ENCODE measurements at regions of chr20 and their contacts with region 1.

Region 1: DNA sequence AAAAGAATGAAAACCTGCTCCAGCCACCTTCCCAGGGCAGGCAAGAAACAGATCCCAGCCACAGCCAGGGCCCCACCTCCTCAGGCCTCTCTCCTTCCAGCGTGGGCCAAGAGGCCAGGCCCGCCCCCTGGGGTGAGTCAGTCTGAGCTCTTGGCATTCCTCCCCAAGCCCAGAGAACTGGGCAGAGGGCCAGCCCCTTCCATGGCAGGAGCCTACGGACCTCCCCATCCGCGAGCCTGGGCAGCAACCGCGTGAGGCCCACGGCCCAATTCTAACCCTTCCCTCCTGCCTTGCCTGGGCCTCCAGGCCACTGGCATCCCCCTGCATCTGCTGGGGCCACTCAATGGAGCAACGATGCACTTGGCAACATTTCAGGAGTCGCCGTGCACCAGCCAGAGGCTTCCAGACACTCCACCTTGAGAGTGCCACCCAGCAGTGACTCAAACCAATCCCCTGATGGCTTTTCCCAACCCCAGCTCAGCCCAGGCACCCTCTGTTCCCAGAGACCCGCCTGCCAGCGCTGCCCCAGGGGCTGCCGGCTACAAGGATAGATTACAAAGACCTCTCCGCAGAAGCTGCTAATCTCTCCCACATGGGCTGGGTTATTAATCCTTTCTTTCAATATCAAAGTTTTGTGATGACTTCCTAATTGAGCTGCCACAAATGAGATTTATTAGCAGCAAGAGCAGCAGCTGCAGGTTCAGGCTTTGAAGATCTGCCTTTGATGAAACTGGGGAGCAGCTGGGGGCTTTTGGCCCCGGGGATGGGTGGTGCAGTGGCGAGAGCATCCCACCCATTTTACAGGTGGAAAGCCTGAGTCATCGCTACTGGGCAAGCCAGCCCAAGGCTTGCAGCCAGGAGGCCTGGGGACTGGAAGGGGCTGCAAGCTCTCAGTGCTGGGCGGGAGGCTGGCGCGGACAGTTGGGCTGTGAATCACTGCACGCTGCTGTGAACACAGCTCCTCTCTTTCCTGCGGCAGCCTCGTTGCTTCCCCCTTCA is 85.7 kb downstream of the NFATC2 start:
- DNase-seq: peak; percentile 96
- H3K4me3 ChIP-seq: peak overlapping the region; percentile 21 to 43 (median 30)
- H3K27ac ChIP-seq: peak overlapping the region; percentile 58
- H3K4me1 ChIP-seq: peaks cover 20% of the 10 kb centered on the region
- H3K27me3 ChIP-seq: no peaks in the 10 kb centered on the region
- CTCF ChIP-seq: no peak

Region 2: GRCh38 chr20:51375561-51375960 is 81.2 kb before region 1 on chr20:
- CTCF ChIA-PET with region 1: no interaction called
- dilution Hi-C with region 1: no loop called
- in situ Hi-C with region 1: no loop called
- intact Hi-C with region 1: no loop called
- DNase-seq: no peak
- H3K4me3 ChIP-seq: no peak overlapping the region
- H3K27ac ChIP-seq: no peak overlapping the region
- H3K4me1 ChIP-seq: no peaks in the 10 kb centered on the region
- H3K27me3 ChIP-seq: no peaks in the 10 kb centered on the region
- CTCF ChIP-seq: no peak

Region 3: GRCh38 chr20:51385646-51386530 is 70.9 kb before region 1 on chr20:
- CTCF ChIA-PET with region 1: no interaction called
- dilution Hi-C with region 1: no loop called
- in situ Hi-C with region 1: no loop called
- intact Hi-C with region 1: loop called (anchors 5 kb)
- DNase-seq: peak; percentile 16
- H3K4me3 ChIP-seq: no peak overlapping the region
- H3K27ac ChIP-seq: no peak overlapping the region
- H3K4me1 ChIP-seq: no peaks in the 10 kb centered on the region
- H3K27me3 ChIP-seq: no peaks in the 10 kb centered on the region
- CTCF ChIP-seq: peak; percentile 41 to 79

Region 4: DNA sequence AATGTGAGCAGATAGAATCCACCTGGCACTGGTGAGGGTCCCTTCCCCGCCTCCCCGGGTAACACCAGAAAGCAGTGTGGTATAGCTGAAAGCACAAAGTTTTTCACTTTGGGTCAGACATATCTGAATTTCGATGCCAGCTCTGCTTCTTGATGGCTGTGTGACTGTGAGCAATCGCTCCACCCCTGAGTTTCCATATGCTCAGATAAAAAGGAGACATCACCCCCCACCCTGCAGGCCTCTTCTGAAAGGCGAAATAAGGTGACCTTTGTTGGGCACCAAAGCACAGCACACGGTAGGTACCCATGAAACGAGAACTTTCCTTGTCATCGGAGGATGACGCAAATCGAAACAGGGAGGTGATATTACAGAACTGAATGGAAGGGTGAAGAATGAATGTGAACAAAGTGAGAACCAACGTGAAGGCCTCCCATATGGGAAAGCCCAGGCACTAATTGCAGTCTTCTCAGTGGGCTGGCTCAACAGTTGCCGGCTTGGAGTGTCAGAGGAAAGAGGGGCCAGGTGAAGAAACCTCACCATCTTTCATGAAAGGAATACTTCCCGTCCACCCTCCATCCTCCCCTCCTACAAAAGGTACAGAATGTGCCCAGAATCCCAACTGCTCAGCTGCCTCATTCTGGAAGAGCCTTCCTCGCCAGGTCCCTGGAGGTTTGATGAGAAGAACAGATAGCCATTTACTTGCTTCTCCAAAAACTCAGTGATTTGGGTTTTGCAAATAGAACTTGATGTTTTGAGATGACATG is 23.9 kb after region 1 on chr20:
- CTCF ChIA-PET with region 1: no interaction called
- dilution Hi-C with region 1: no loop called
- in situ Hi-C with region 1: no loop called
- intact Hi-C with region 1: loop called (anchors 1 kb)
- DNase-seq: no peak
- H3K4me3 ChIP-seq: no peak overlapping the region
- H3K27ac ChIP-seq: no peak overlapping the region
- H3K4me1 ChIP-seq: peaks cover 5% of the 10 kb centered on the region
- H3K27me3 ChIP-seq: no peaks in the 10 kb centered on the region
- CTCF ChIP-seq: no peak

Region 5: DNA sequence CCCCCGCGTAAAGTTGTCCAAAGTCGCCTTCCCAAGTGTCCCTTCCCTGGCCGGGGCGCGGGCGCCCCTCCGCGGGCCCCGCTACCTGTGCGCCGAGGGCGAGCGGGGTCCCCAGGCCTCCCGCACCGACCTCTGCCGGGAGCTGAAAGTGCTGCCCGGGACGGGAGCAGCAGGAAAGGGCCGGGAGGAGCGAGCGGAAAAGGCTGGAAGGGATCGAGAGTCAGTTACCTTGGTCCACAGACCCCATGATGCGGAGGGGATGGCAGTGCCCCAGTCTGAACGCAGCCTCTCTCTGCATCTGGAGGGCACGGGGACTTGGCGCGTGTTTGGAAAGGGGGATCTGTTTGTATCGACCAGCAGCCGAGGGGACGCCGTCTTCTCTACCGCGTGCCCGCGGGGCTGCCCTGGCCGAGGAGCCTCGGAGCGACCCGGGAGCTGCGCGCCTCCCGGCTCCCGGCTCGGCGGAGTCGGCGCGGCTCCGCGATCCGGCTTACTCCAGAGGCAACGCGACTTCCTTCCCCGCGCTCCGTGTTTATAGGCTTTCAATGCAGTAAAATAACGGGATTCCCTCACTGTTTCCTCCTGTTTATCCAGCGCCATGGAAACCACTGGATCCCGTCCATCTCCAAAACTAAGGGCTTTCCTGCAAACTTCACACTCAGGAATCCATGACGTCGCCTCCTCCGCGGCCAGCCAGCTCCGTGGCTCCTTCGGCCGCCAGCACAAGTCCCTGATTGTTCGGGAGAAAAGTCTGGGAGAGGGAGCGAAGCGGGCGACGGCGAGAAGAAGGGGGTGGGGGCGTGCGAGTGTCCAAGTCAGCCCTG is 105.7 kb after region 1 on chr20:
- CTCF ChIA-PET with region 1: no interaction called
- dilution Hi-C with region 1: no loop called
- in situ Hi-C with region 1: no loop called
- intact Hi-C with region 1: loop called (anchors 5 kb)
- DNase-seq: peak; percentile 75
- H3K4me3 ChIP-seq: peak overlapping the region; percentile 32 to 42 (median 39)
- H3K27ac ChIP-seq: no peak overlapping the region
- H3K4me1 ChIP-seq: peaks cover 23% of the 10 kb centered on the region
- H3K27me3 ChIP-seq: peaks cover 25% of the 10 kb centered on the region
- CTCF ChIP-seq: no peak

Region 6: GRCh38 chr20:51712501-51713197 is 255.8 kb after region 1 on chr20:
- CTCF ChIA-PET with region 1: no interaction called
- dilution Hi-C with region 1: no loop called
- in situ Hi-C with region 1: no loop called
- intact Hi-C with region 1: no loop called
- DNase-seq: no peak
- H3K4me3 ChIP-seq: no peak overlapping the region
- H3K27ac ChIP-seq: no peak overlapping the region
- H3K4me1 ChIP-seq: no peaks in the 10 kb centered on the region
- H3K27me3 ChIP-seq: no peaks in the 10 kb centered on the region
- CTCF ChIP-seq: peak; percentile 19 to 33